Activated CD4-positive, alpha-beta T cell treated with anti-CD3 and anti-CD28 coated beads for 36 hours (primary cell): ENCODE measurements at regions of chr5 and their contacts with region 1.

Region 1: DNA sequence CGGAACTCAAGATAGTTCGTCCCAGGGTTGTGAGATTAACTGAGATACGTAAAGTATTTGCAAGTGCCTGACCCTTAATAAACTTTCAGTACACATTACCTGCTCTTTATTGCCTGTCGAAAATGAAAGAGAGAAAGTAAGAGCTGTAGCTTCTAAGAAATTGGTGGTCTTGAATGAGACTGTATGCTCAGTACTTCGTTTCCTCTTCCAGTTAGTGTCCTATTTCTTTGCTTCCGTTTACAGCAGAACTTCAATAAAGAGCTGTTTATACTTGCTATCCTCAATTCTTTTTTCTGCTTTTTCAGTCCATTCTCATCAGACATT is 534 bp downstream of the SRFBP1 start:
- DNase-seq: no peak
- ATAC-seq: peak; percentile 31
- H3K4me3 Mint-ChIP-seq: peak overlapping the region; percentile 94
- H3K27ac Mint-ChIP-seq: peak overlapping the region; percentile 98
- H3K4me1 Mint-ChIP-seq: peaks cover 40% of the 10 kb centered on the region
- H3K27me3 Mint-ChIP-seq: peaks cover 4% of the 10 kb centered on the region

Region 2: GRCh38 chr5:122007546-122007945 is 45.2 kb after region 1 on chr5:
- CTCF ChIA-PET with region 1: interaction called, 3 read pairs
- POLR2A ChIA-PET with region 1: no interaction called
- intact Hi-C with region 1: loop called (anchors 2 to 5 kb)
- DNase-seq: no peak
- ATAC-seq: no peak
- H3K4me3 Mint-ChIP-seq: no peak overlapping the region
- H3K27ac Mint-ChIP-seq: no peak overlapping the region
- H3K4me1 Mint-ChIP-seq: peaks cover 34% of the 10 kb centered on the region
- H3K27me3 Mint-ChIP-seq: no peaks in the 10 kb centered on the region

Region 3: GRCh38 chr5:122076664-122077365 is 114.5 kb after region 1 on chr5:
- CTCF ChIA-PET with region 1: interaction called, 4 read pairs
- POLR2A ChIA-PET with region 1: no interaction called
- intact Hi-C with region 1: loop called (anchors 2 to 5 kb)
- DNase-seq: peak; percentile 83
- ATAC-seq: peak; percentile 80
- H3K4me3 Mint-ChIP-seq: peak overlapping the region; percentile 62
- H3K27ac Mint-ChIP-seq: no peak overlapping the region
- H3K4me1 Mint-ChIP-seq: peaks cover 17% of the 10 kb centered on the region
- H3K27me3 Mint-ChIP-seq: peaks cover 55% of the 10 kb centered on the region

Region 4: DNA sequence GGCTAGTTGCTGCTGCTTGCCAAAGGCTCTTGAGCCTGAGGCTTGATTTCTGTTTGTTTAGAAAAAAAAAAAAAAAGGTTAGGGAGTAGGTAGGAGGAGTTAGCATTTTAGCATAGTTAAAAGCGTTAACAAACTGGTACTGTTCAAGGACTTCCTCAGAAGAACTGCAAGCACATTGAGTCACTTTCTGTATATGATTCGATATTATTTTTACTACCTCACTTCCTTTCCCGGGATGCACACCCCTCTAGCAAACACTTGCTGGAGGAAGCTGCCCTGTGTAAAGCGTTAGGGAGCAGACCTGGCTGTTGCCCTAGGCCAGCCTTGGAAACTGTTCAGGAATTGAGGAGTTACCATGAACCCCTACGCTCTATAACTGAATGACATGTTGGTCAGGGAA is 1476.6 kb after region 1 on chr5:
- CTCF ChIA-PET with region 1: no interaction called
- POLR2A ChIA-PET with region 1: no interaction called
- intact Hi-C with region 1: loop called in 1 of 2 experiments (anchors 5 kb)
- DNase-seq: peak; percentile 58
- ATAC-seq: peak; percentile 76
- H3K4me3 Mint-ChIP-seq: peak overlapping the region; percentile 24
- H3K27ac Mint-ChIP-seq: peak overlapping the region; percentile 83
- H3K4me1 Mint-ChIP-seq: peaks cover 32% of the 10 kb centered on the region
- H3K27me3 Mint-ChIP-seq: peaks cover 2% of the 10 kb centered on the region